PC-9 (cell line): ENCODE measurements at regions of chr7 and their contacts with region 1.

Region 1: GRCh38 chr7:974820-975681 is at the start of gene COX19:
- DNase-seq: peak; percentile 70 to 93
- H3K4me3 ChIP-seq: peak within 1 kb of the TSS; percentile 84
- H3K27ac ChIP-seq: peak within 1 kb of the TSS; percentile 79
- H3K4me1 ChIP-seq: peaks cover 18% of the 10 kb centered on the region; the same call in 1 of the 2 replicates
- H3K27me3 ChIP-seq: no peaks in the 10 kb centered on the region
- CTCF ChIP-seq: no peak
- total RNA-seq, gene COX19: 28.9 and 29.3 TPM in 2 replicates

Region 2: DNA sequence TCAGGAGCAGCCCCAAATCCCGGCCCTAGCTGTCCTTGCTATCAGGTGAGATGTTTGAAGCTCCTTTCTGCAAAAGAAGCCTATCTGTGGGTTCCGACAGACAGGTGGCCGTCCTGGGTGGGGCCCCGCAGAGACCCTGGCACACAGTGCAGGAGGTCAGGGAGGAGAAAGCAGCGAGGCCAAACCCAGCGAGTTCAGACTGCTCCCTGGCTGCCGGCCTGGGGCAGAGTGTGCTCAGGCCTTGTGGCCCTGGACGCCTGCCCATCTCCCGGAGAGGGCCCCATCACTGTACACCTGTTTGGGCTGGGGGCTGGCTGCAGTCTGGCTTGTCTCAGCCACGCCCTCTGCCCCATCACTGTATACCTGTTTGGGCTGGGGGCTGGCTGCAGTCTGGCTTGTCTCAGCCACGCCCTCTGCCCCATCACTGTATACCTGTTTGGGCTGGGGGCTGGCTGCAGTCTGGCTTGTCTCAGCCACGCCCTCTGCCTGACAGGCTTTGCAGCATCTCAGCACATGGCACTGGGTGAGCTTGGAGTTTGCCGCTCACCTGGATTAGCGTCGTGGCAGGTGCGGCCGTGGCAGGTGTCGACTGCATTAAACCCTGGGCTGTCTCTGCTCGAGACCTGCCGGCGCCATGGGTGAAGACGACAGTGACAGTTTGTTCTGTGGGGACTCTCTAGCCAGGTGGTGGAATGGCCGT is 236.1 kb before region 1 on chr7:
- CTCF ChIA-PET with region 1: no interaction called
- POLR2A ChIA-PET with region 1: no interaction called
- intact Hi-C with region 1: no loop called
- DNase-seq: no peak
- H3K4me3 ChIP-seq: no peak overlapping the region
- H3K27ac ChIP-seq: no peak overlapping the region
- H3K4me1 ChIP-seq: no peaks in the 10 kb centered on the region
- H3K27me3 ChIP-seq: no peaks in the 10 kb centered on the region
- CTCF ChIP-seq: no peak

Region 3: GRCh38 chr7:913736-914516 is 61.1 kb before region 1 on chr7:
- CTCF ChIA-PET with region 1: no interaction called
- POLR2A ChIA-PET with region 1: no interaction called
- intact Hi-C with region 1: loop called (anchors 1 kb)
- DNase-seq: peak; percentile 65 to 98
- H3K4me3 ChIP-seq: no peak overlapping the region
- H3K27ac ChIP-seq: no peak overlapping the region
- H3K4me1 ChIP-seq: peaks cover 12% of the 10 kb centered on the region
- H3K27me3 ChIP-seq: no peaks in the 10 kb centered on the region
- CTCF ChIP-seq: no peak; the same call in 1 of the 2 replicates